Aorta (tissue), 5 donors: ENCODE measurements at regions of chr19 and their contacts with region 1.

Region 1: DNA sequence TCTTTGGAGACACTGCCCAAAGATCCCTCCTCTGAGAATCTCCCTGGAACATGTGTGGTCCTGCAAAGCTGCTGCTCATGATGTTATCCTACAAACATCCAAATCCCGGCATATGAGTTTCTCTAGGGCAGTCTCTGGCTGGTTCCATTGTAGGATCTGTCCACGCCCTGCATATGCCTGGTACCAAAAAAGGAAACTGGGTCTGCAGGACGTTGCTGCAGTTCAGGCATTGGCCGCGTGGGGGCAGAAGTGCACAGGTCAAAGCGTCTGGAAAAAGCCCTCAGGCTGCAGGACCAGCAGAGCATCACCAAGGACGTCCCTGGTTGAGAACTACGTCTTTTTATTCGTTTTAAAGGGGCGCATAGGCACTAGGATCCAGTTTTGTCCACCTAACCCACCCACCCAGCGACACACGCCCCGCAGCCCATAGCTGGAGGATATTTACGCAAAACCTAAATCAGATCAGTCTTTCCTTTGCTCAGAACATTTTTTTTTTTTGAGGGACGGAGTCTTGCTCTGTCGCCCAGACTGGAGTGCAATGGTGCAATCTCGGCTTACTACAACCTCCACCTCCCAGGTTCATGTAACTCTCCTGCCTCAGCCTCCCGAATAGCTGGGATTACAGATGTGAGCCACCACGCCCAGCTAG is 12.9 kb upstream of the ZNF564 start:
- DNase-seq: peak; percentile 93 to 98
- ATAC-seq: peak; percentile 93
- H3K4me3 ChIP-seq: no peak overlapping the region
- H3K27ac ChIP-seq: no peak overlapping the region
- H3K4me1 ChIP-seq: no peaks in the 10 kb centered on the region
- H3K27me3 ChIP-seq: no peaks in the 10 kb centered on the region

Region 2: GRCh38 chr19:12187625-12188024 is 376.5 kb before region 1 on chr19:
- intact Hi-C with region 1: no loop called
- DNase-seq: no peak
- ATAC-seq: no peak
- H3K4me3 ChIP-seq: no peak overlapping the region
- H3K27ac ChIP-seq: no peak overlapping the region
- H3K4me1 ChIP-seq: no peaks in the 10 kb centered on the region
- H3K27me3 ChIP-seq: no peaks in the 10 kb centered on the region

Region 3: GRCh38 chr19:12666265-12667048 is 102.3 kb after region 1 on chr19 and contains the starts of genes MAN2B1 and WDR83:
- intact Hi-C with region 1: loop called in 1 of 2 experiments (anchors 2 kb)
- DNase-seq: peak; percentile 82 to 91
- ATAC-seq: peak; percentile 88
- H3K4me3 ChIP-seq: peak within 1 kb of the TSS; percentile 44 to 68
- H3K27ac ChIP-seq: no peak within 1 kb of the TSS
- H3K4me1 ChIP-seq: no peaks in the 10 kb centered on the region
- H3K27me3 ChIP-seq: no peaks in the 10 kb centered on the region
- total RNA-seq, gene MAN2B1: 74.8 to 111 TPM
- total RNA-seq, gene WDR83: 7.1 to 11.8 TPM